Mammary epithelial cell (primary cell): ENCODE measurements at regions of chr6 and their contacts with region 1.

Region 1: DNA sequence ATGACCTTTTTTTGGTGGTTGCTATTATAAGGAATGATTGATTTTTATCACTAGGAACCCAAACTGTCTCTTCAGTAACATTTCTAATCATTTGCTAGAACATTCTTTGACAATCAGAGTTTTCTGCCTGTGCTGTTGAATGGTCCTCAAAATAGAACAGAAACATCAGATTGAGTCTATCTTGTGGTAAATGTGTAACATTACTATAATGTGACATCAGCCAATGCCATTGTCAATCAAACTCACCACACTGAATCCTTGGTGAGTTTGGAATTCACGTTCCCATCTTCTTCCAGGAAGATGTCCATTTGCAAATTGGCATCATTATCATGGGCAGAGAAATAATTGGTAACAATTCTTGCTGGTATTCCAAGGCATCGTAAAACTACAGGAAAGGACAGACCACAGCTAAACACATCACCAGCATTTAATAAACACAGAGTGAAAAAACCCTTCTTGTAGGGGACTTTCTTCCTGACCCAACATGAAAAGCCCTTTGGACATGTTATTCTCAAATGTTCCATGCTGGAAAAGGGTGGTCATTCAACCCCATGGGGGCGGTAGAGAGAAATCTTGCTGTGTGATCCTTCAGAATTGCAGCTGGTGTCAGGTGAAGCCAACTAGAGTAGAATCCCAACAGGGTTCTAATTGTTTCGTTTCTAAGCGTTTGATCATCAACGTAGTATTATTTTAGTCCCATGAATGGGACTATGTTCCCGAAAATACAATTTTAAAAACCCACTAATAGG is 98.5 kb downstream of the F13A1 start:
- DNase-seq: no peak
- H3K4me3 ChIP-seq: no peak overlapping the region
- H3K27ac ChIP-seq: no peak overlapping the region
- H3K4me1 ChIP-seq: no peaks in the 10 kb centered on the region
- H3K27me3 ChIP-seq: no peaks in the 10 kb centered on the region
- CTCF ChIP-seq: peak; percentile 32 to 36

Region 2: DNA sequence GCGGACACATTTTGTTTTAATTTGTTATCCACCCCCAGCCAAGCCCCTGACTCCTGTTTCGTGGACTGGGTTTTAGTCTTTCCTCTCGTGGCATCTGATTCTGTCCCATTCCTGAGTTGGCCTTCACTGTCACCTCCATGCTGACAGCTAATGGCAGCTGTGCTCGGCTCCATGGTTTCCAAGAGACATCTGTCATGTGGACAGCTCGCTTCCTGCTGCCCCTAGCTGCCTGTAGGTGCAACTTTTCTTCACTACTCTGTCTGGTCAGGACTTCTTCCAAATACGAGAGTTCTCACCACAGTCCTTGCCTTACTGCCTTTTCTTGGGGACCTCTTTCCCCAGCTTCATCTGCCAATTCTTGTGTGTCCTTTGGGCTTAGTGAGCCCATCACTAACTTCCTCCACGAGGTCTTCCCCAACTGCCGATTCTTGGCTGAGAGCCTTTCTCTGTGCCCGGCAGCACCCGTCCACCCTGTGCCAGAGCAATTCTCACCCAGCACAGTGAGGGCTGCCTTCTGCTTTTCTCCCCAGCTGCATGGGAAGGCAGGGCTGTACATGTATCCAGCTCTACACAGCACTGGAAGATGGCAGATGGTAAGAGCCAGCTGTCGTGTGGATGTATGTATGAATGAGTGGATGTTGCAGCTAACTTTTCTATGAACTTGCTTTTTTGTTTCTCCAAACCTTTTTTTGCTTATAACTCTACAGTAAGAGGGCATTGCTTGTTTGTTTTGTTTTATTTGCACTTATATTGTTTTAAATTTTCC is 41.9 kb before region 1 on chr6:
- CTCF ChIA-PET with region 1: no interaction called
- dilution Hi-C with region 1: no loop called
- in situ Hi-C with region 1: no loop called
- intact Hi-C with region 1: loop called (anchors 10 kb)
- DNase-seq: no peak
- H3K4me3 ChIP-seq: no peak overlapping the region
- H3K27ac ChIP-seq: no peak overlapping the region
- H3K4me1 ChIP-seq: no peaks in the 10 kb centered on the region
- H3K27me3 ChIP-seq: no peaks in the 10 kb centered on the region
- CTCF ChIP-seq: no peak

Region 3: GRCh38 chr6:6665555-6666243 is 443.7 kb after region 1 on chr6:
- CTCF ChIA-PET with region 1: no interaction called
- dilution Hi-C with region 1: no loop called
- in situ Hi-C with region 1: no loop called
- intact Hi-C with region 1: no loop called
- DNase-seq: no peak
- H3K4me3 ChIP-seq: no peak overlapping the region
- H3K27ac ChIP-seq: no peak overlapping the region
- H3K4me1 ChIP-seq: no peaks in the 10 kb centered on the region
- H3K27me3 ChIP-seq: peaks cover 2% of the 10 kb centered on the region
- CTCF ChIP-seq: no peak